ENCODE measurements at regions of chr17 and their contacts with region 1.

Region 1: GRCh38 chr17:50861071-50861676 is 5.0 kb downstream of the TOB1 start:
- DNase-seq: no peak
- H3K4me3 ChIP-seq: no peak overlapping the region
- H3K27me3 ChIP-seq: no peaks in the 10 kb centered on the region
- CTCF ChIP-seq: no peak

Region 2: DNA sequence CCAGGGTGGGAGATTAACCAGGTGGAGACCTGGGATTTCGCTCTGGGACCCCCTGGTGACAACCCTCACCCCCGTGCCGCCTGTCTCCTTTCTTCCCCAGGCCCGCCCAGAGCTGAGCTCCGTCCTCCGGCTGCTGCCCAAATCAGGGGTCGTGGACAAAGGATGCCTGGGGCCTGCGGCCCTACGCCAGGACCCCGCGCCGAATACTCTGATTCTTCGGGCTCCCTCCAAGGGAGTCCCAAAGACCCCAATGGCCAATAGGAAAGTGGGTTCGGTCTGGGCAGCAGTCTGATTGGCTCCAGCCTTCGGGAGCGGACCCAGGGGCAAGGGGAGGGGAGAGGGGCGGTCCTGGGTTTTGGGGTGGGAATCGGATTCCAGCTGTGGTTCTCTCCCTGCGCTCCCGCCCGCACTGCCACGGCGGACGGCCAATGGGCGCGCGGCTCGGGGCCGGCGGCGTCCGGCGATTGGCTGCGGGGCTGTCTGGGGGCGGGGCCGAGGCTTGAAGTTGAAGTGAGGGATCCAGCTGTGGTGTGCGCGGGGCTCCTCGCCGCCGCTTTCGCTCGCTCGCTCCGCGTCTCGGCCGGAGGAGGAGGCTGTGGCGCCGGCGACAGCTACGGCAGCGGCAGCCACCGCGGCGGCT is 300.9 kb before region 1 on chr17 and contains the start of gene CACNA1G:
- CTCF ChIA-PET with region 1: no interaction called
- POLR2A ChIA-PET with region 1: no interaction called
- DNase-seq: peak; percentile 25
- H3K4me3 ChIP-seq: peak within 1 kb of the TSS; percentile 37
- H3K27me3 ChIP-seq: peaks cover 40% of the 10 kb centered on the region
- CTCF ChIP-seq: no peak
- polyA plus RNA-seq, gene CACNA1G: 0.01 and 0.02 TPM in 2 replicates

Region 3: GRCh38 chr17:50749245-50749644 is 111.9 kb before region 1 on chr17:
- CTCF ChIA-PET with region 1: no interaction called
- POLR2A ChIA-PET with region 1: no interaction called
- DNase-seq: no peak
- H3K4me3 ChIP-seq: no peak overlapping the region
- H3K27me3 ChIP-seq: no peaks in the 10 kb centered on the region
- CTCF ChIP-seq: no peak

Region 4: DNA sequence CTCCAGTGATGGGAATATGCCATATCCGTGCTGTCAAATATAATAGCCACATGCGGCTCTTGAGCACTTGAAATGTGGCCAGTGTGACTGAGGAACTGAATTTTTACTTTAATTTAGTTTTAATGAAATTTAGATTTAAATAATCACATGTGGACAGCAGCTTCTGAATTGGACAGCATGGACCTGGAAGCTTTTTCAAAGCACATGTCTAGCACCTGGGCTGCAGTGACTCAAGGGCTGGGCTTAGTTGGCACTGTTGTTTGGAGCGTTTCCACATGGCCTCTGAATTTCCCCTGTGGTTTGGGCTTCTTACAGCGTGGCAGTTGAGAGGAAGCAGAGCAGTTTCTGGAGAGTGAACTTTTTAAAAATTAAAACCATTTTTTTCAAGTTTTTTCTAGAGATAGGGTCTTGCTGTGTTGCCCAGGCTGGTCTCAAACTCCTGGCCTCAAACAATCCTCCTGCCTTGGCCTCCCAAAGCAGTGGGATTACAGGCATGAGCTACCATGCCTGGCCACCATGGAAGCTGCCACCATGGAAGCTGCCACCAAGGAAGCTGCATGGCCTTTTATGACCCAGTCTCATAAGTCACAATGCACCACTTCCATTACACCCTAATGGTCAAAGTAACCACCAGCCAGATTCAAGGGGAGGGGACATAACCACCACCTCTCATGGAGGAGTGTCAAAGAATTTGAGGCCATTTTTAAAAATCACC is 11.7 kb after region 1 on chr17:
- CTCF ChIA-PET with region 1: no interaction called
- POLR2A ChIA-PET with region 1: no interaction called
- DNase-seq: no peak
- H3K4me3 ChIP-seq: no peak overlapping the region
- H3K27me3 ChIP-seq: 0 out of 2 replicates have a peak, but pooled peaks cover 2% of the 10 kb centered on the region
- CTCF ChIP-seq: no peak

Region 5: DNA sequence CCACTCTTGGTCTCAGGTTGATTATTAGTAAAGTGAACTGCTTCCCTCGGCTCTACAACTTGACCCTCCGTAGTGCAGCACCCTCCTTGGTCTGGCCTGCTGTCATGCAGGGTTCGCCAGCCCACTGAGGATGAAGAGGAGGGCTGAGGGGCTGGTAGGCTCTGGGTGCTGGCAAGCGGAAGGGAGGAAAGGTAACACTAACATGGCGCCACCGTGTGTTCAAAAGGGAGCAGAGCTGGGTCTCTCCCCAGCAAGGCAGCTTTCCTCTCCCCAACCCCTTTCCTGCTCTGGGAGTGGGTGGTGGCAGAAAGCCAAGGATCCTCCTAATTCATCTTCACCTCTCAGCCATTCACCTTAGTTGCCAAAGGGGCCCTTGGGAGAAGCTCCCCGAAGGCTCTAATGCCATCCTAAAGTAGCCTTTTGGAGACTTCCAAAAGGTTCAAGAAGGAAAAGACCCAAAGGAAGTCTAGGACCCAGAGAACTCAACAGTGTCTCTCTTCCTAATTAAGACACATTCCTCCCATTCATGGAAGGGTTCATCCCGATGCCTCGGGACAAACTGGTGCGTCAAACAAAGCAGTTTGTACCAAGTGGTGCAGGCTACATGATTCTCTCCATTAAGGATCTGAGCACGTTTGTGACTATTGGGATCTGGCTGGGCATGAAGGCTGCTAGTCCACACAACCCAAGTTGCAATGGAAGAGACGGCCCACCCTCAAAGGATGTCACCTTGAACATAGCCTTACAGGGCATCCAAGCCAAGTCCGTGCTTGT is 95.8 kb after region 1 on chr17:
- CTCF ChIA-PET with region 1: interaction called, 294 read pairs
- POLR2A ChIA-PET with region 1: interaction called, 12 read pairs
- DNase-seq: no peak
- H3K4me3 ChIP-seq: no peak overlapping the region
- H3K27me3 ChIP-seq: no peaks in the 10 kb centered on the region
- CTCF ChIP-seq: peak; percentile 82